AG04450 (cell line): ENCODE measurements at regions of chr18 and their contacts with region 1.

Region 1: DNA sequence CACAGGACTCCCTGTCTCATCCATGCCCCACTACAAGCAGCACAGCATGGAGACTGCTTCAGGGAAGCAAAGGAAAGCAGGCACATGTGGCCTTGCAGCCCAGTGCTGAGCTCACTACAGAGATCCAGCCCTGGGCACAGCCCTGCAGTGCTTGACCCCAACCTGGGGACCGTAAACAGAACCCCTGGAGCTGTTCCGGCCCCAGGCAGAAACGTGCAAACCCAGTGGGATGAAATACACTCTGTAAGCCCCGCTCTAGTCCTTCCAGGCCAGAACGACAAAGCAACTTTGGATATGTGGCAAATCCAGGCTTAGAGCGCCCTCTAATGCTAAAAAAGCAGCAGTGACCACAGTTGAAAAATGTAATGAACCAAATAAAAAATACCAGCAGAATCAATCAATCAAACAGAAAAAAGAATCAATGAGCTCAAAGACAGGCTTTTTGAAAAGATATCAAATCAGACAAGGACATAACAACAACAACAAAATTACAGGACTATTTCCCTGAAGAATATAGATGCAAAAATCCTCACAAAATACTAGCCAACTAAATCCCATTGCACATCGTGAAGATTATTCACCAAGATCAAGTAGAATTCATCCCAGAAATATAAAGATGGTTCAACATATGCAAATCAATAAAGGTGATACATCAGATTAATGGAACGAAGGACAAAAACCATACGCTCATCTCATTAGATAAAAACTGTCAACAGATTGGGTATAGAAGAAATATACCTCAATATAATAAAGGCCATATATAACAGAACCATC is 45.6 kb downstream of the ZNF519 start:
- DNase-seq: no peak
- H3K4me3 ChIP-seq: no peak overlapping the region
- H3K27ac ChIP-seq: no peak overlapping the region
- H3K27me3 ChIP-seq: no peaks in the 10 kb centered on the region
- CTCF ChIP-seq: peak; percentile 70

Region 2: DNA sequence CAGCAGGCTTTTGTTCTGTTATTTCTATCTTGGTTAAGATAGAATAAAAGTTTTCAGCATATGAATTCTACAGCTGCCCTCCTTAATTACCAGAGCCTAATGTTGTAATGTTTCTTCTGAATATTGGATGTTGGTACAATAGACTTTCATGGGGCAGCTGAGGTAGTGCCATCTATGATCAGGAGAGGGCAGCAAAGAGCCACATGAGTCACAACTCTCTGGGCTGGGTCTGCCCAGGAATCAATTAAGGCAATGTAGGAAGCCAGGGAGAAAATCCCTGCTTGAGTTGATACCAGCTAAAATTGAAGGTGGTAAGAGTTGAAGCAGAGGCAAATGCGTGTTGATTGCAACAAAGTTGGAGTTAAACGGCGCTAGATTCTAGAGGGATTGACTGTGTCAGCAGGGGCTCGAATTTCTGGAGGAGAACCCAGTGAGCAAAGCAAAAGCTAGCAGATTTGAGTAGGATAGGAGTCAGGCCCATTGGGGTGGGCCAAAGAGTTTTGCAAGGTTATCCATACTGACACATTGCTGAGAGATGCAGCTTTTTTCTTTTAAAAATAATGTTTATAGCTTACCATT is 273.3 kb before region 1 on chr18:
- CTCF ChIA-PET with region 1: interaction called, 98 read pairs
- POLR2A ChIA-PET with region 1: no interaction called
- DNase-seq: no peak
- H3K4me3 ChIP-seq: no peak overlapping the region
- H3K27ac ChIP-seq: no peak overlapping the region
- H3K27me3 ChIP-seq: no peaks in the 10 kb centered on the region
- CTCF ChIP-seq: peak; percentile 86

Region 3: DNA sequence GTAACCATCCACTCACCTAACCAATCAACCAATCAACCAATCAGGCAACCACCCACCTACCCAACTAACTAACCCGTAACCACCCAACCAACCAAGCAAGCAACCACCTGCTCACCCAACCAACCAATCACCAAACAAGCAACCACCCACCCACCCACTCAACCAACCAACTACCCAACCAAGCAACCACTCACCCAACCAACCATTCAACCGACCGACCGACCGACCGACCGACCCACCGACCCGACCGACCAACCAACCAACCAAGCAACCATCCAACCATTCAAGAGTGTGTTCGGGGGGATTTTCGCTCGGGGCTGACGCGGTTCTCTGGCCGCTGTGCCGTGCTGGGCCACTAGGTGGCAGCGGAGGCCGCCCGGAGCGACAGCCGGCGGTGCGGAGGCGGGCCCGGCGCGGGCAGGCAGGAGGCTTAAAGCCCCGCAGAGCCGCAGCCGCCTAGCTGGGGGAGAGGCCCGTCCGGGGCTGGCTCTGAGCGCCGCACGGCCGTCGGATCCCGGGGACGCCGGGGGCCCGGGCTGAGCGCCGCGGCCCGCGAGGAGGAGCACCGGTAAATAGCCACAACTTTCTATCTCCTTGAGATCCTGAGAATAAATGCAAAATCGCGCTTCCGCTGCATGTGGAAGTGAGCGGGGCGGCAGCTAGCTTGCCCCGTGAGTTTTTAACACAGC is 262.8 kb before region 1 on chr18 and contains the start of gene MC5R:
- CTCF ChIA-PET with region 1: interaction called, 18 read pairs
- POLR2A ChIA-PET with region 1: no interaction called
- DNase-seq: no peak
- H3K4me3 ChIP-seq: peak within 1 kb of the TSS; percentile 41
- H3K27ac ChIP-seq: no peak within 1 kb of the TSS
- H3K27me3 ChIP-seq: no peaks in the 10 kb centered on the region
- CTCF ChIP-seq: peak; percentile 73
- polyA plus RNA-seq, gene MC5R: not detected in 2 replicates

Region 4: DNA sequence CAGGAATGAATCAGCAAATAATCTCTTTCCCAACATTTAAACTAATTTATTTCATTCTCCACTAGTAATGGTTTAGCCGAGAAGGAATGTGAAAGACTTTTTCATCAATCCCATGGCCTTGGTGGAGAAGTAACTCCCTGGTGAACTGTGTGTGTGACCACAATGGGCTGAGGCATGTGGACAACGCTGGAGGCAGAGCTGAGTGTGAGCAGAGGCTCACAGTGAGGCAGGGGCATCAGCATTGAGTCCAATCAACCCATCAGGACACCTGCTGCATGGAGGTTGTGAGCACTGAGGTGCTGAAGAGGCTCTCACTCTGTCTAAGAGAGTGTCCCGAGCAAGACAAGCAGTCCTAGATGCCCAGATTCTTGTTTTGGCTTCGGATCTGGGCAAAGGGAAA is 33.0 kb before region 1 on chr18:
- CTCF ChIA-PET with region 1: interaction called, 12 read pairs
- POLR2A ChIA-PET with region 1: no interaction called
- DNase-seq: no peak
- H3K4me3 ChIP-seq: no peak overlapping the region
- H3K27ac ChIP-seq: no peak overlapping the region
- H3K27me3 ChIP-seq: no peaks in the 10 kb centered on the region
- CTCF ChIP-seq: no peak

Region 5: DNA sequence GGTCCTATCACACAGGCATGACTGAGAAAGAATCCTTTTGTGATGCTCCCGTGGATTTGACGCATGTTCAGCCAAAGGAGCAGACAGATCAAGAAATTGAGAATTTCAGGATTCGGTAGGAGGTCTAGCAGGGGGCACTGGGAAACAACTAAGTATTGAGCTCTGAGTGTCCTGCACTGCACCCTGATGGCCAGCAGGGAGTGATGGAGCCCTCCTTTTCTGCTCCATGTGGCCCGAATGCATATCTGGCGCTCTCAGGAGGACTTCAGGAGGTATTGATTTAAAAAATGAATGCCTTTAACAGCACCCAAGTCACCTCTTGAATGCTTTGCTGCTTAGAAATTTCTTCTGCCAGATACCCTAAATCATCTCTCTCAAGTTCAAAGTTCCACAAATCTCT is 12.5 kb before region 1 on chr18:
- CTCF ChIA-PET with region 1: interaction called, 13 read pairs
- POLR2A ChIA-PET with region 1: no interaction called
- DNase-seq: no peak
- H3K4me3 ChIP-seq: no peak overlapping the region
- H3K27ac ChIP-seq: no peak overlapping the region
- H3K27me3 ChIP-seq: no peaks in the 10 kb centered on the region
- CTCF ChIP-seq: no peak

Region 6: DNA sequence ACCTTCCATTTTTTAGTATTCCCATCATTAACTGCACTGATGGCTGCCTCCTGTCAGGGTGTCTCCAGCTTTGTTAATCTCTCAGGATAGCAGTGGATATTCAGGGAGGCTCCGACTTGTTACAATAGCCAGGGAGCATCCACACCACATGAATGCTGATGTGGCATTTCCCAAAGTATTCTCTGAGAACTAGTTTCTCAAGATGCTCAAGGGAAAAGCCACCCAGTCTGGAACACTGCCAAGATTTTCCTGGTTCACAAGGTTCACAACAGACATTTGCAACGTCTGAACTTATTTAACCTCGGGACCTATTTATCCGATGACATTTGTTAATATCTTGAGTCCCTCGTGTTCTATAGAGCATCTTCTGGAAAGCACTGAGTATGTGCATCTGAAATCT is 11.8 kb after region 1 on chr18:
- CTCF ChIA-PET with region 1: interaction called, 17 read pairs
- POLR2A ChIA-PET with region 1: no interaction called
- DNase-seq: no peak
- H3K4me3 ChIP-seq: no peak overlapping the region
- H3K27ac ChIP-seq: no peak overlapping the region
- H3K27me3 ChIP-seq: no peaks in the 10 kb centered on the region
- CTCF ChIP-seq: no peak

Region 7: DNA sequence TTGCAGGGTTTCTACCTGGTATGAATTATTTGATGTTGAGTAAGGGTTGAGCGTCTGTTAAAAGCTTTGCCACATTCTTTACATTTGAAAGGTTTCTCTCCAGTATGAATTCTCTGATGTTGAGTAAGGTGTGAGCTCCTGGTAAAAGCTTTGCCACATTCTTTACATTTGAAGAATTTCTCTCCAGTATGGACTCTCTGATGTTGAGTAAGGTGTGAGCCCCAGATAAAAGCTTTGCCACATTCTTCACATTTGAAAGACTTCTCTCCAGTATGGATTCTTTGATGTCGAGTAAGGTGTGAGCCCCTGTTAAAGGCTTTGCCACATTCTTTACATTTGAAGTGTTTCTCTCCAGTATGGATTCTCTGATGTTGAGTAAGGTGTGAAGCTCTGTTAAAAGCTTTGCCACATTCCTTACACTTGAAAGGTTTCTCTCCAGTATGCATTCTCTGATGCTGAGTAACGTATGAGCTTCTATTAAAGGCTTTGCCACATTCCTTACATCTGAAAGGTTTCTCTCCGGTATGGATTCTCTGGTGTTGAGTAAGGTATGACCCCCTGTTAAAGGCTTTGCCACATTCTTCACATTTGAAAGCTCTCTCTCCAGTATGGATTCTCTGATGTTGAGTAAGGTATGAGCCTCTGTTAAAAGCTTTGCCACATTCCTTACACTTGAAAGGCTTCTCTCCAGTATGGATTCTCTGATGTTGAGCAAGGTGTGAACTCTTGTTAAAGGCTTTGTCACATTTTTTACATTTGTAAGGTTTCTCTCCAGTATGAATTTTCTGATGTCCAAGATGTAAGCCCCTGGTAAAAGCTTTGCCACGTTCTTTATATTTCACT is 18.5 kb after region 1 on chr18:
- CTCF ChIA-PET with region 1: interaction called, 10 read pairs
- POLR2A ChIA-PET with region 1: no interaction called
- DNase-seq: no peak
- H3K4me3 ChIP-seq: no peak overlapping the region
- H3K27ac ChIP-seq: no peak overlapping the region
- H3K27me3 ChIP-seq: no peaks in the 10 kb centered on the region
- CTCF ChIP-seq: no peak